ENCODE measurements at regions of chr12 and their contacts with region 1.

Region 1: DNA sequence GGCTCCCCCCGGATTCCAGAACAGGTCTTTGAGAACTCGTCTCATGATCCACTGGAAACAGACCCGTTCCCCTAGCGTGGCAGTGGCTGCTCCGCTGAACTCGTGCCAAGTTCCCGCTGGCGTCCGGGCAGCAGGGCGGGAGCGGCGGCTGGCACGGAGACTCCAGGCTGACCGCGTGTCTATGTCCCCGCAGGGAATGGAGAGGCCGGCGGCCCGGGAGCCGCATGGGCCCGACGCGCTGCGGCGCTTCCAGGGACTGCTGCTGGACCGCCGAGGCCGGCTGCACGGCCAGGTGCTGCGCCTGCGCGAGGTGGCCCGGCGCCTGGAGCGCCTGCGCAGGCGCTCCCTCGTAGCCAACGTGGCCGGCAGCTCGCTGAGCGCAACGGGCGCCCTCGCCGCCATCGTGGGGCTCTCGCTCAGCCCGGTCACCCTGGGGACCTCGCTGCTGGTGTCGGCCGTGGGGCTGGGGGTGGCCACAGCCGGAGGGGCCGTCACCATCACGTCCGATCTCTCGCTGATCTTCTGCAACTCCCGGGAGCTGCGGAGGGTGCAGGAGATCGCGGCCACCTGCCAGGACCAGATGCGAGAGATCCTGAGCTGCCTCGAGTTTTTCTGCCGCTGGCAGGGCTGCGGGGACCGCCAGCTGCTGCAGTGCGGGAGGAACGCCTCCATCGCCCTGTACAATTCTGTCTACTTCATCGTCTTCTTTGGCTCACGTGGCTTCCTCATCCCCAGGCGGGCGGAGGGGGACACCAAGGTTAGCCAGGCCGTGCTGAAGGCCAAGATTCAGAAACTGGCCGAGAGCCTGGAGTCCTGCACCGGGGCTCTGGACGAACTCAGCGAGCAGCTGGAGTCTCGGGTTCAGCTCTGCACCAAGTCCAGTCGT is 1.5 kb downstream of the APOLD1 start:
- DNase-seq: peak; percentile 68 to 90
- ATAC-seq: peak; percentile 92 to 95 (median 94)
- H3K4me3 ChIP-seq: peak overlapping the region; percentile 65
- H3K4me3 Mint-ChIP-seq: peak overlapping the region; percentile 89
- H3K27ac ChIP-seq: peak overlapping the region; percentile 76
- H3K27ac Mint-ChIP-seq: peak overlapping the region; percentile 70 to 84
- H3K4me1 ChIP-seq: peaks cover 17% of the 10 kb centered on the region
- H3K4me1 Mint-ChIP-seq: peaks cover 10 to 23% of the 10 kb centered on the region in 2 donors
- H3K27me3 ChIP-seq: no peaks in the 10 kb centered on the region
- H3K27me3 Mint-ChIP-seq: no peaks in the 10 kb centered on the region
- CTCF ChIP-seq: no peak

Region 2: DNA sequence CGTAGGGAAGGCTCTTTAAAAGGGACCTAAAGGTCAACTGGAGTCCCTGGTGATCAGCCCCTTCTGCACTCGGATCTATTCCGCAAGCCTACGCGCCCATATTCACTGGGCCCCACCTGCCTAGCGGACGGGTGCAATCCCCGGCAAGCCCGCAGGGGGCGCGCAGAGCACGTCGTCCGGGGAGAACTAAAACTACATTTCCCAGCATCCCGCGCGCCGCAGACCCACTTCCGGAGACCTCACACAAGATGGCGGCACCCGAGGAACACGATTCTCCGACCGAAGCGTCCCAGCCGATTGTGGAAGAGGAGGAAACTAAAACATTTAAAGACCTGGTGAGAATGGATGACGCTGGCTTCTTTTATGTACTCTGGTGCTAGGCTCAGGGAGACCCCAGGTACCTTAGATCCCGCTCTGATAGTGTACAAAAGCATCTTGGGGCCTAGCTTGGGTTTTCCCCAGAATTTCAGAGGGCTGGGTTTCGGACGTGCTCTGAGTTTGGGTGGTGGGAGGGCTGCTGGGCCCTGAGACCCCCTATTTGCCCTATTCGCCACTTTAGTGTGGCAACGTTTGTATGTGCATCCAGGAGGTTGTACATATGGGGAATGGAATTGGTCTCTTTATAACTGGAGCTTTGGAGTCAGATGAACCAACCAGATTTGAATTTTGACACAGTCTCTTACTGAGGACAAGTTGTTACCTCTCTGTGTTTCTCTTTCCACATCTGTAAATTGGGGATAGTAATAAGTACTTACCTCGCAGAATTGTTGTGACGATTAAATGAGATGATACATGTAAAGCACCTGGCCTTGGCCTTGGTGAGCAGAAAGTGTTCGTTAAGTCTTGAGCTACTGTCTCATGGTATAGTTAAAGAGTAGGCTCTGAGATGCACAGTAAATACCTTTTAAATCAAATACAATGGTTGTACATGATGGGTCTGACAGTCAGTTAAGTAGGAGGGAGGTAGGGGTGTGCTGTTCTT is 26.5 kb after region 1 on chr12 and contains the start of gene DDX47:
- intact Hi-C with region 1: loop called (anchors 1 kb)
- DNase-seq: peak; percentile 97 to 98
- ATAC-seq: peak; percentile 98 to 100 (median 99)
- H3K4me3 ChIP-seq: peak within 1 kb of the TSS; percentile 76
- H3K4me3 Mint-ChIP-seq: peak within 1 kb of the TSS; percentile 95
- H3K27ac ChIP-seq: peak within 1 kb of the TSS; percentile 76
- H3K27ac Mint-ChIP-seq: peak within 1 kb of the TSS; percentile 91 to 93
- H3K4me1 ChIP-seq: peaks cover 23% of the 10 kb centered on the region
- H3K4me1 Mint-ChIP-seq: peaks cover 44 to 50% of the 10 kb centered on the region in 2 donors
- H3K27me3 ChIP-seq: no peaks in the 10 kb centered on the region
- H3K27me3 Mint-ChIP-seq: no peaks in the 10 kb centered on the region
- CTCF ChIP-seq: peak; percentile 89
- total RNA-seq, gene DDX47: 98.9 to 120 (median 114) TPM

Region 3: DNA sequence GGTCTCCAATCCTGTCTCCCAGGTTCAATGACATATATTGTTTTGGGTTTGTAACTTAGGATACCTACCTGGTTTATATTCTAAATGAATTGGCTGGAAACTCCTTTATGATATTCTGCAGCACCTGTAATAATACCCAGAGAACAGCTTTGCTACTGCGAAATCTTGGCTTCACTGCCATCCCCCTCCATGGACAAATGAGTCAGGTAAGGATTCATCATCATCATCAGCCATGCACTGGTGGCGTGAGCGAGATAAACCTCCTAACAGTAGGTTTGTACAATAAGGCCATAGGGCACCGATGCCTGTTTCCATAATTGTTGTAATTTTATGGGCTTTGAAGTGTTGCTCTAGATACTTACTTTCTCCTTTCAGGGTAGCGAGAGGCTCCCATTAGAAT is 36.9 kb after region 1 on chr12:
- intact Hi-C with region 1: no loop called
- DNase-seq: no peak
- ATAC-seq: no peak
- H3K4me3 ChIP-seq: no peak overlapping the region
- H3K4me3 Mint-ChIP-seq: no peak overlapping the region
- H3K27ac ChIP-seq: no peak overlapping the region
- H3K27ac Mint-ChIP-seq: no peak overlapping the region
- H3K4me1 ChIP-seq: no peaks in the 10 kb centered on the region
- H3K4me1 Mint-ChIP-seq: peaks cover 14 to 15% of the 10 kb centered on the region in 2 donors
- H3K27me3 ChIP-seq: no peaks in the 10 kb centered on the region
- H3K27me3 Mint-ChIP-seq: no peaks in the 10 kb centered on the region
- CTCF ChIP-seq: no peak

Region 4: DNA sequence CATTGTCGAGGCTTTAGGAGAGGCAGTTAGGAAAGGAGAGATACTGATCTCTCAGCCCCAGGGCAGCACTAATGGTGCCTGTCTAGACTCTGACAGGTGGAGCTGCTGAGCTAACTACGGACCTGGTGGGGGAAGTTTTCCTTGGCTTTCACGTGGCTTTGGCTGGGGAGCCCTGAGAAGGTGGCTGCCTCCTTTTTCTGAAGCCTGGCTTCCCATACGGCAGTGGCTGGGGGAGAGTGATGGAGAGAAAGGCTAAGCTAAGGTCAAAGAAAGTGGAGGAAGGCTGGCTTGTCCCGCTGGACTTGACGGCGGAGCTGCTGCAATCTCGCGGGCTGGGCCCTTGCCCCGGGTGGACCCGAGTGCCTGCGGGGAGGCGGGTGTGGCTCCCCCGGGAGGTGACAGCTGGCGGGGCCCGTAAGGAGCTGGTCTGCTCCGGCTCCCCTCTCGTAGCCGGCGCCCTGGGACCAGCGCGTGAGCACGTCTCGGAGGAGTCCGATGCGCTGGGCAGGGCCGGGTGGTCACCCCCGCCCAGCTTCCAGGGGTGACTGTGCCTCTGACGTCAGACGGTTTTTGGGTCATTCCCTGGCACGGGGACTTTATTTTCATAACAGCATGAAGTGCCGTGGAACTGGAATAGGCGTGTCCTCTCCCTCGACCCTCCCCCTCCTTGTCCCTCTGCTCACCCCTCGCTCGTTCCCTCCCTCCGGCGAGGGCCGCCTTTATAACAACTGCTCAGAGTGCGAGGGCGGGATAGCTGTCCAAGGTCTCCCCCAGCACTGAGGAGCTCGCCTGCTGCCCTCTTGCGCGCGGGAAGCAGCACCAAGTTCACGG is 104.1 kb after region 1 on chr12 and contains the start of gene GPRC5A:
- intact Hi-C with region 1: loop called (anchors 10 kb)
- DNase-seq: peak; percentile 15 to 55
- ATAC-seq: peak; percentile 40 to 63 (median 60)
- H3K4me3 ChIP-seq: no peak within 1 kb of the TSS
- H3K4me3 Mint-ChIP-seq: peak within 1 kb of the TSS; percentile 54
- H3K27ac ChIP-seq: no peak within 1 kb of the TSS
- H3K27ac Mint-ChIP-seq: no peak within 1 kb of the TSS
- H3K4me1 ChIP-seq: peaks cover 13% of the 10 kb centered on the region
- H3K4me1 Mint-ChIP-seq: no peaks in the 10 kb centered on the region
- H3K27me3 ChIP-seq: peaks cover 24% of the 10 kb centered on the region
- H3K27me3 Mint-ChIP-seq: peaks cover 41 to 46% of the 10 kb centered on the region in 2 donors
- CTCF ChIP-seq: no peak
- total RNA-seq, gene GPRC5A: 0.09 to 0.28 TPM in 2 of 3 donors, not detected in the other

Region 5: GRCh38 chr12:12999959-13000615 is 213.1 kb after region 1 on chr12 and contains the start of gene HEBP1:
- intact Hi-C with region 1: loop called (anchors 2 kb)
- DNase-seq: peak; percentile 96
- ATAC-seq: peak; percentile 89 to 99 (median 92)
- H3K4me3 ChIP-seq: peak within 1 kb of the TSS; percentile 78
- H3K4me3 Mint-ChIP-seq: peak within 1 kb of the TSS; percentile 92
- H3K27ac ChIP-seq: peak within 1 kb of the TSS; percentile 76
- H3K27ac Mint-ChIP-seq: peak within 1 kb of the TSS; percentile 78 to 89
- H3K4me1 ChIP-seq: peaks cover 25% of the 10 kb centered on the region
- H3K4me1 Mint-ChIP-seq: peaks cover 24 to 46% of the 10 kb centered on the region in 2 donors
- H3K27me3 ChIP-seq: peaks cover 2% of the 10 kb centered on the region
- H3K27me3 Mint-ChIP-seq: peaks cover 0 to 4% of the 10 kb centered on the region in 2 donors
- CTCF ChIP-seq: no peak
- total RNA-seq, gene HEBP1: 10.8 to 13.5 (median 11.9) TPM